Activated CD4-positive, alpha-beta memory T cell treated with anti-CD3 and anti-CD28 coated beads for 36 hours (primary cell): ENCODE measurements at regions of chr3 and their contacts with region 1.

Region 1: DNA sequence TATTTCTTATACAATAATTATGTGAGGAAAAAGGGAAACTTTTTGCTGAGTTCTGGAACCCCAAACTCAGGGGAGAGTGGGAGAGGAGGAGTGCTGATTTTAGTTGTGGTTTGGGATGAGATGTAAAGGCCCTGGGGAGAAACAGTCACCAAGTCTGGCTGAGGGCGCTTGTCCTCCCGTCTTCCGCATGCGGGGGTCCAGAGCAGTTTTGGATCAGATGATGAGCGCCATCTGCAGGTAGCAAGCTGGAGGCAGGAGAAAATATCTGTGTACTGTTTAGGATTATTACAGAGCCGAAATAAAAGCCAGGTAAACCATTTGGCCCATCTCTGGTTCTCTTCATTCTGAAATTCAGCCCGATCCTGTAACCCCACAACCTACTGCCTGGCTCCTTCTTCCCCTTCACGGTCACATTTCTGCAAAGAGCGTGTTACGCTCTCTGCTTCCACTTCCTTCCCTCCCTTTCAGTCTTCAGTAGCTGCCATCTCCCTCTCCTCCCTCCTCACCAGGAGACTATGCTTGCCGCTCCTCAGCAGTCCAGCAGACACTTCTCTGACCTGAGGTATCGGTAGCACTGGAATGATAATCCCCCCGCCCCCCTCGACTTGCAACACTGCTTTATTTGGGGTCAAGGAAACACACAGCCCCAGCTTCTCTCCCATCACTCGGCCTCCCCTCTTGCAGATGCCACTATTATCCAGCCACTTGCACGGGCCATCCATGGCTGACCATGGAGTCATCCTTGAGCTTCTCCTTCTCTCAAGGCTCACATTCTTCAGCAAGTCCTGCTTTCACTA is 1.4 kb upstream of the PARP14 start:
- DNase-seq: peak; percentile 90
- H3K4me3 Mint-ChIP-seq: peak overlapping the region; percentile 99
- H3K27ac Mint-ChIP-seq: peak overlapping the region; percentile 96
- H3K4me1 Mint-ChIP-seq: peaks cover 51% of the 10 kb centered on the region
- H3K27me3 Mint-ChIP-seq: no peaks in the 10 kb centered on the region

Region 2: DNA sequence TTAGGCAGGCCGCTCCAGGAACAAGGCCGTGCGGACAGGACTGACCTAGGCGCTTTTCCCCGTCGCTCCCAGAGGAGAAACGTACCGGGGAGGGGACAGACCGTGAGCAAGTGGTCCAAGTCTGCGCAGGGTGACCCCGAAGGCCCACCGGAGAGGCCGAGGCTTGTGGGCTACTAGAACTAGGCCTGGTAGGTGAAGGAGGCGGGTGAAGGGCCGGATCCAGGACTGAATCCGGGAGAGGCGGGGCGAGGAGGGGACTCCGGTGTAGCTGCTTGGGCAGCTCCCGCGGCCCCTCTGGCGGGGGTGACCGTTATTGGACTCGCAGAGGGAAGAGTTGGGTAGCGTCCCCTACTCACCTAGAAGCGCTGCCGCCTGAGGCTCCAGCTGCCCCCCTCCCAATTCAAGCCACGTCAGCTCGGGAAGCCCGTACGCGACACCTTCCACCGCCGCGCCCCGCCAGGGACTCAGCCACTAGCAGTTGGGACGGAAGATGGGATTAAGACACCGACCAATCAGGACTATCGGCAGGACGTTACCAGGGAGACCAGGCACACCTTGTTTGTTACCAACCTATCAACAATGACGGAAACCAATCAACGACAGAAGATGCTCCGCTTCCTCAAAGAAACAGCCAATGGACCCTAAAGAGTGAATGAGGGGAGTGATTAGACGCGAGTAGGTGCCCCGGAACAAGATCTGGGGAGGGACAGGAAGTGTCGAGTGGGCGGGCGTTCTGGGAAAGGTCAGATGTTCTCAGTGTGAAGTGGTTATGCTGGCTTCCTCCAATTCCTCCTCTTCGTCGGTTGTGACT is 929.8 kb before region 1 on chr3 and contains the start of gene GOLGB1:
- CTCF ChIA-PET with region 1: no interaction called
- POLR2A ChIA-PET with region 1: no interaction called
- intact Hi-C with region 1: loop called (anchors 5 kb)
- DNase-seq: peak; percentile 97
- H3K4me3 Mint-ChIP-seq: no peak within 1 kb of the TSS
- H3K27ac Mint-ChIP-seq: no peak within 1 kb of the TSS
- H3K4me1 Mint-ChIP-seq: peaks cover 10% of the 10 kb centered on the region
- H3K27me3 Mint-ChIP-seq: no peaks in the 10 kb centered on the region
- total RNA-seq, gene GOLGB1: 22.7 to 26.0 TPM

Region 3: GRCh38 chr3:121957674-121958415 is 721.4 kb before region 1 on chr3:
- CTCF ChIA-PET with region 1: no interaction called
- POLR2A ChIA-PET with region 1: no interaction called
- intact Hi-C with region 1: no loop called
- DNase-seq: no peak
- H3K4me3 Mint-ChIP-seq: no peak overlapping the region
- H3K27ac Mint-ChIP-seq: no peak overlapping the region
- H3K4me1 Mint-ChIP-seq: no peaks in the 10 kb centered on the region
- H3K27me3 Mint-ChIP-seq: no peaks in the 10 kb centered on the region

Region 4: GRCh38 chr3:122392868-122393844 is 286.1 kb before region 1 on chr3:
- CTCF ChIA-PET with region 1: interaction called, 46 read pairs
- POLR2A ChIA-PET with region 1: no interaction called
- intact Hi-C with region 1: no loop called
- DNase-seq: peak; percentile 20
- H3K4me3 Mint-ChIP-seq: no peak overlapping the region
- H3K27ac Mint-ChIP-seq: no peak overlapping the region
- H3K4me1 Mint-ChIP-seq: peaks cover 32% of the 10 kb centered on the region
- H3K27me3 Mint-ChIP-seq: no peaks in the 10 kb centered on the region

Region 5: GRCh38 chr3:122533931-122534334 is 145.3 kb before region 1 on chr3:
- CTCF ChIA-PET with region 1: interaction called, 10 read pairs
- POLR2A ChIA-PET with region 1: interaction called, 3 read pairs
- intact Hi-C with region 1: no loop called
- DNase-seq: peak; percentile 65
- H3K4me3 Mint-ChIP-seq: no peak overlapping the region
- H3K27ac Mint-ChIP-seq: peak overlapping the region; percentile 35
- H3K4me1 Mint-ChIP-seq: peaks cover 37% of the 10 kb centered on the region
- H3K27me3 Mint-ChIP-seq: no peaks in the 10 kb centered on the region

Region 6: DNA sequence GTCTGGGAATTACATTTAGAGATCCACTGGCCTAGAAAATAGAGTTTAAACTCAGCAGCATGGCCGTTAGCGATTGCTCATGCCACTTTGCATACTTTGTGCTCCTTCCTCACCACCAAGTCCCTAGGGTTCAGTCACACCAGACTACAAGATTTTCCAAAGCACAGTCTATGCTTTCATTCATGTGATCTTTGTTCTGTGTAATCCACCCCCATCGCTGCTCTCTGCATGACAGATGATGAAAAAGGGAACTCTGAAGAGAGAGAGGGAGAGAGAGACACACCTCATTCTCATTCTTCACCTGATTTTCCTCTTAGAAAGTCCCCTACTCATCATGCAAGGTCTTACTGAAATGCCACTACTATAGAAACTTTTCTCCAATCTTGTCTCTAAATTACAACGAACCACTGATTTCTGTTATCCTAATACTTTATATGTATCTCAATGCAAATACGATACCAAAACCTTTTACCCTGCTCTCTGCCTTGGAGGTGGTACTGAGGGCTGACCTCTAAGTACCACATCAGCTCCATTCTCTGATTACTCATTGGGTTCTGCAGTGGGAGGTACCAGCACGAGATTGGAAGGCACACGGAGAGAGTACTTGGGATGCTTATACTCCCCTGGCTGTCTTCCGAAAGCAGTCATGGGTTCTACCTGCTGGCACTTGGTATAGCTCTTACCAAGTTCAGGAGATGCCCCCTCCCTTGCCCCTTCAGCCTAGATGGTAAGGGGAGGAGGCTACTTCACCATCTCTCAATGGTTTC is 102.9 kb before region 1 on chr3:
- CTCF ChIA-PET with region 1: interaction called, 32 read pairs
- POLR2A ChIA-PET with region 1: interaction called, 3 read pairs
- intact Hi-C with region 1: loop called (anchors 1 kb)
- DNase-seq: peak; percentile 70
- H3K4me3 Mint-ChIP-seq: peak overlapping the region; percentile 35
- H3K27ac Mint-ChIP-seq: peak overlapping the region; percentile 82
- H3K4me1 Mint-ChIP-seq: peaks cover 61% of the 10 kb centered on the region
- H3K27me3 Mint-ChIP-seq: no peaks in the 10 kb centered on the region

Region 7: GRCh38 chr3:122636697-122637096 is 42.6 kb before region 1 on chr3:
- CTCF ChIA-PET with region 1: no interaction called
- POLR2A ChIA-PET with region 1: no interaction called
- intact Hi-C with region 1: no loop called
- DNase-seq: no peak
- H3K4me3 Mint-ChIP-seq: no peak overlapping the region
- H3K27ac Mint-ChIP-seq: no peak overlapping the region
- H3K4me1 Mint-ChIP-seq: peaks cover 5% of the 10 kb centered on the region
- H3K27me3 Mint-ChIP-seq: no peaks in the 10 kb centered on the region

Region 8: DNA sequence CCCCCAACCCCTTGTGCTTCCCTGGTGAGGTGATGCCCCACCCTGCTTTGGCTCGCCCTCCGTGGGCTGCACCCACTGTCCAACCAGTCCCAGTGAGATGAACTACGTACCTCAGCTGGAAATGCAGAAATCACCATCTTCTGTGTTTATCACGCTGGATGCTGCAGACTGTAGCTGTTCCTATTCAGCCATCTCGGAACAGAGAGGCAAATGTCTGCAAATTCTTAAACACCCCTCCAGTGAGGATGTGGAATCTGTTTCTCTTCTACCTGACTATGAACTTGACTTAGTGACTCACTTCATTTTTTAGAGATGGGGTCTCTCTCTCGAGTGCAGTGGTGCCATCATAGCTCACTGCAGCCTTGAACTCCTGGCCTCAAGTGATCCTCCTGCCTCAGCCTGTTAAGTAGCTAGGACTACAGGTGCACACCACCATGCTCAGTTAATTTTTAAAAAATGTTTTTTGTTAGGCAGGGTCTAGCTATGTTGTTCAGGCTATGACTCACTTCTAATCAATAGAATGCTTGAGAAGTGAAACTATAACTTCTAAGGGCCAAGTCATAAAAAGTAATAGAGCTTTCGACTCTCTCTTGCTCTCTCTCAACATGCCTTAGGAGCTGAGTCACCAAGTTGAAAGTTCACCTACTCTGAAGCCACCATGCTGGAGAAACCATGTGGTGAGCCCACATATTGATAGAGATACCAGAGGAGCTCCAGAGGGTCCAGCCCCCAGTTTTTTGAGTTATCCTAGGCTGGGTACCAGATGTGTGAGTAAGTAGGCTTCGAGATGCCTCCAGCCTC is 10.2 kb before region 1 on chr3:
- CTCF ChIA-PET with region 1: interaction called, 27 read pairs
- POLR2A ChIA-PET with region 1: no interaction called
- intact Hi-C with region 1: loop called (anchors 1 kb)
- DNase-seq: peak; percentile 64
- H3K4me3 Mint-ChIP-seq: no peak overlapping the region
- H3K27ac Mint-ChIP-seq: peak overlapping the region; percentile 25
- H3K4me1 Mint-ChIP-seq: peaks cover 15% of the 10 kb centered on the region
- H3K27me3 Mint-ChIP-seq: no peaks in the 10 kb centered on the region